ENCODE measurements at regions of chr11 and their contacts with region 1.

Region 1: DNA sequence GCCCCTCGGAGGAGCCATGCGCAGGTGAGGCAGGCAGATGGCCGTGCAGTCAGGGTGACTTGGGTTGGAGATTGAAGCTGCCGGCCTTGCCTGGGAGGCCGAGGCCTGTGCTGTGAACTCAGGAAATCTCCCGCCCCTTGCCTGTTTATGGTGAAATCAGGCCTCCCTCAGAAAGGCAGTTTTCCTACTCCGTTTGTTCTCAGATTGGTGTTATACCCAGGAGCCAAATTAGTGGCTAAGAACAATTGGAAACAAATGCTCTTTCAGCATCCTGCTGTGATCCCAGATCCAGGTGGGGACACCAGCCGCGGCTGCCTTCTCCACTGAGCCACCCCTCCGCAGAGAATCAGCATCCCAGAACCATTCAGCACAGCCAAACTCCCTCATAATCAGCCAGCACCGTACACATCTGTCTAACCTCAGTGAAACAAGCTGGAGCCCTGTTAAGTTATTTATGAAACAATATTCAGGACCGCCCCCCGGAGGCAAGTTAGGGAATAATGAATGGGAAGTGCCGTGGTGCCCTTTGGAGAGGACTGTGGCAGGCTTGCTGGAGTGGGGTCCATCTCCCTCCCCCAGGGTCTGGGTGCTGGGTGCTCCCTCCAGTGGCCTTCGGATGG is 60.0 kb downstream of the PKNOX2 start:
- DNase-seq: peak; percentile 63
- ATAC-seq: peak; percentile 62 to 64

Region 2: DNA sequence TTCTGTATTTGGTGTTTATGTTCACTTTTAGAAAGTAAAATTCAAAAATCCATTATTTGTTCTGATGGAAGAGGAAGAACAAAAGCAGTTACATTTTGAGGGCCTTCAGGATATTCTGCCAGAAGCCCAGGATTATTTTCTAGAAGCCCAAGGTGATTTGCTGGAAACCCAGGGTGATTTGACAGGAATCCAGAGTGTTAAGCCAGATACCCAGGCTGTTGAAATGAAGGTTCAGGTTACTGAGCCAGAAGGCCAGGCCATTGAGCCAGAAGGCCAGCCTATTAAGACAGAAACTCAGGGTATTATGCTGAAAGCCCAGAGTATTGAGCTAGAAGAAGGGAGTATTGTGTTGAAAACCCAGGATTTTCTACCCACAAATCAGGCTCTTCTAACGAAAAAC is 237.4 kb before region 1 on chr11:
- intact Hi-C with region 1: no loop called
- DNase-seq: no peak
- ATAC-seq: no peak

Region 3: DNA sequence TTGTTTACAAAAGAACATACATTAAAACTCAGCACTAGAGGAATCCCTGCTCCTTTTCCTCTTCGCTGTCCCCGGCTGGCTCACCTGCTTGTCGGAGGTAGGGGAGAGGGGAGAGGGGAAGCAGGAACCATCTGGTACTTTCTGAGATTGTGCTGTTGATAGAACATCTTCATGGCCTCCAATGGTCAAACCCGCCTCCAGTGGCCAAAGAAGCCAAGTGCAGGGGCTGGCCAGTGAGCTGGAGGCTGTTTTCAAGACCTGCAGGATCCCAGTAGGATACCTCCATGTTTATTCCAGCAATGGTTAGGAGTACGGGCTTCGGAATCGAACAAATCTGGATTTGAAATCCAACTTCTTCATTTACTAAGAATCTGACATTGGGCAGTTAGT is 32.7 kb after region 1 on chr11:
- intact Hi-C with region 1: no loop called
- DNase-seq: no peak
- ATAC-seq: no peak

Region 4: DNA sequence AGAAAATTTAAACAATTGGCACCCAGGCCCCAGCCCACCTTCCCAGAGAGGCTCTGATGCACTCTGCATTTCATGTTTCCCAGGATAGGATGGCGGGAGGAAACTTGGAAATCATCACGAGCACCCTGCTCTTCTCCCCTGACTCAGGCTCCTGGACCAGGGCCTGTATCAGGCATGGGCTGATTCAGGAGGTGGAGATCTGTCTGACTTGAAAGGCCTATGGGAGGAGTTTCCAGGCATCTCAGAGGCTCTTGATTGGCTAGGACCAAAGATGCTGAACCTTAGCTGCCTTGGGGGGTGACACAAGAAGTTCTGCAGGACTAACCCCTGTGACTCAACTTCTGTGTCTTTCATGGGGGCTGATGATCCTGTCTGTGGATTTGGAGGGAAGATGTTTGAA is 46.2 kb after region 1 on chr11:
- intact Hi-C with region 1: loop called in 1 of 2 experiments (anchors 5 kb)
- DNase-seq: peak; percentile 46
- ATAC-seq: peak in 1 of 2 donors; percentile 77

Measured in left cardiac atrium (tissue), 4 donors.